Right ventricle myocardium inferior (tissue), 1 donor: ENCODE measurements at regions of chr4 and their contacts with region 1.

Region 1: GRCh38 chr4:105471566-105472176 is 2.2 kb downstream of the PPA2 start:
- DNase-seq: no peak
- ATAC-seq: peak; percentile 48

Region 2: DNA sequence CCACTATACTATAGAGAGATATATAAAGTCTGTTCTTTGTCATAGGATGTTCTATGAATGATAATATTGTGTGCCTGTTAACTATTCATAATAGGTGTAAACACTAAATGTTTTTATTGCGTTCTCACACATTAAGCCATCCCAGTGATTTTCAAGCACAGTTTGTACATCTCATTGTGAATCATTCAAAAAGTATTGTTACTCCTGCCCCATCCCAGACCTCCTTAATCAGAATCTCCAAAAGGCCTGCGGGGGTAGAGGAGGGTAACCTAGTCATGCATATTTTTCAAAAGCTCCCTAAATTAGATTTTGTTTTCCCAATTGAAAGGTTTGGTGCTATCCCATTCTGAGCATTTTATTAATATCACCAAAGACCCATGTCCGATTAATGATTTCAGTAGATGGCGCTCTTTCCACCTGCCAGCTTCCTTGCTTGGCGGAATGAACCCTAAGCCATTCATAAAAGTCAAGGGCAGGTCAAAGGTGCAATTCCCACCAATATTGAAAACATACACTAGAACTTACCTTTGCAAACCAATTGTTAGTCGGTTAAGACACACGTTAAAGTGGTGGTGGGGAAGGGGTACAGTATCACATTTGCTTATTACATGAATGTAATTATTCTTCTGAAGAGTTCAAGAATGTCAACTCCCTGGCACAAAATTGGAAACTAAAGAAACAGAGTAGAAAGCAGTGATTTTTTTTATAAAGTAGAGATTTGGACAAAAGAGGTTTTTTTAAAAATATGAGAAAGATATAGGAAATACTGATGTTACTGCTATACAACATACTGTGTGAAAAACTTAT is 330.8 kb before region 1 on chr4:
- intact Hi-C with region 1: loop called (anchors 1 kb)
- DNase-seq: no peak
- ATAC-seq: peak; percentile 60

Region 3: DNA sequence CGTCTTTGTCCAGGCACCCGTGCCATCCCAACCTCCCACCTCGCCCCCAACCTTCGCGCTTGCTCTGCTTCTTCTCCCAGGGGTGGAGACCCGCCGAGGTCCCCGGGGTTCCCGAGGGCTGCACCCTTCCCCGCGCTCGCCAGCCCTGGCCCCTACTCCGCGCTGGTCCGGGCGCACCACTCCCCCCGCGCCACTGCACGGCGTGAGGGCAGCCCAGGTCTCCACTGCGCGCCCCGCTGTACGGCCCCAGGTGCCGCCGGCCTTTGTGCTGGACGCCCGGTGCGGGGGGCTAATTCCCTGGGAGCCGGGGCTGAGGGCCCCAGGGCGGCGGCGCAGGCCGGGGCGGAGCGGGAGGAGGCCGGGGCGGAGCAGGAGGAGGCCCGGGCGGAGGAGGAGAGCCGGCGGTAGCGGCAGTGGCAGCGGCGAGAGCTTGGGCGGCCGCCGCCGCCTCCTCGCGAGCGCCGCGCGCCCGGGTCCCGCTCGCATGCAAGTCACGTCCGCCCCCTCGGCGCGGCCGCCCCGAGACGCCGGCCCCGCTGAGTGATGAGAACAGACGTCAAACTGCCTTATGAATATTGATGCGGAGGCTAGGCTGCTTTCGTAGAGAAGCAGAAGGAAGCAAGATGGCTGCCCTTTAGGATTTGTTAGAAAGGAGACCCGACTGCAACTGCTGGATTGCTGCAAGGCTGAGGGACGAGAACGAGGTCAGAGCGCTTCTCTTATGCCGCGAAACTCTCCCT is 325.2 kb before region 1 on chr4 and contains the start of gene TET2:
- intact Hi-C with region 1: loop called (anchors 1 kb)
- DNase-seq: peak; percentile 94
- ATAC-seq: peak; percentile 88
- total RNA-seq, gene TET2: 12.1 TPM

Region 4: GRCh38 chr4:105241451-105241850 is 230.2 kb before region 1 on chr4:
- intact Hi-C with region 1: loop called (anchors 5 kb)
- DNase-seq: peak; percentile 76
- ATAC-seq: peak; percentile 95

Region 5: GRCh38 chr4:105369988-105370387 is 101.7 kb before region 1 on chr4:
- intact Hi-C with region 1: loop called (anchors 10 kb)
- DNase-seq: no peak
- ATAC-seq: no peak